Colonic mucosa (tissue), 4 donors: ENCODE measurements at regions of chr14 and their contacts with region 1.

Region 1: GRCh38 chr14:35046048-35046741 is at the start of gene FAM177A1:
- DNase-seq: peak; percentile 99
- H3K4me3 ChIP-seq: peak within 1 kb of the TSS; percentile 75
- H3K27ac ChIP-seq: peak within 1 kb of the TSS; percentile 99
- H3K4me1 ChIP-seq: peaks cover 17% of the 10 kb centered on the region
- H3K27me3 ChIP-seq: no peaks in the 10 kb centered on the region
- CTCF ChIP-seq: no peak
- total RNA-seq, gene FAM177A1: 114 to 153 TPM

Region 2: GRCh38 chr14:35121887-35122695 is 75.9 kb after region 1 on chr14 and contains the starts of genes PPP2R3C and PRORP:
- intact Hi-C with region 1: loop called (anchors 5 kb)
- DNase-seq: peak; percentile 91
- H3K4me3 ChIP-seq: peak within 1 kb of the TSS; percentile 72
- H3K27ac ChIP-seq: peak within 1 kb of the TSS; percentile 94
- H3K4me1 ChIP-seq: peaks cover 9% of the 10 kb centered on the region
- H3K27me3 ChIP-seq: no peaks in the 10 kb centered on the region
- CTCF ChIP-seq: no peak
- total RNA-seq, gene PPP2R3C: 17.7 to 26.3 TPM
- total RNA-seq, gene PRORP: 23.6 to 36.0 TPM

Region 3: GRCh38 chr14:35607397-35607796 is 561.2 kb after region 1 on chr14:
- intact Hi-C with region 1: no loop called
- DNase-seq: no peak
- H3K4me3 ChIP-seq: no peak overlapping the region
- H3K27ac ChIP-seq: no peak overlapping the region
- H3K4me1 ChIP-seq: no peaks in the 10 kb centered on the region
- H3K27me3 ChIP-seq: no peaks in the 10 kb centered on the region
- CTCF ChIP-seq: no peak